PC-3 (cell line): ENCODE measurements at regions of chr13 and their contacts with region 1.

Region 1: GRCh38 chr13:39144941-39145533 is 106.8 kb downstream of the NHLRC3 start:
- DNase-seq: peak; percentile 65
- ATAC-seq: peak; percentile 60; the same call in 1 of the 2 replicates
- H3K4me3 ChIP-seq: no peak overlapping the region
- H3K27ac ChIP-seq: no peak overlapping the region
- H3K4me1 ChIP-seq: no peaks in the 10 kb centered on the region
- H3K27me3 ChIP-seq: peaks cover 26% of the 10 kb centered on the region
- CTCF ChIP-seq: peak; percentile 75

Region 2: DNA sequence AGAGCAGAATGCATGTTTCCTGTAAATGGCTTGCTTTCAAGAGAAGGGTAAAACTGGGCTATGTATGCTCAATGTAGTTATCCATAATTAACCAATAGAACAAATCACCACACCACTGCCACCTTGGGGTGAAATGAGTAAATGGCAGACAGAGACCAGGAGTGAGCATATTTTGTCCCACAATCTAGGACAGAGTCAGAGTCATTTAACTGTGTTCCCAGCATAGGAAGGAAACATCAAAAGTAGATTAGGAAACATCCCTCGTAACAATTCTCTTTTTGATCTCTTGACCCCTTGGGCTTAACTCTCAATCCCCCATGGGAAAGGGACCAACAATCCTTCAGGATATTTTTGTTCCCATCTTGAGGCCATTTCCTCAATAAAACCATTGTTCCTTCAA is 118.0 kb after region 1 on chr13:
- CTCF ChIA-PET with region 1: interaction called, 3 read pairs
- POLR2A ChIA-PET with region 1: no interaction called
- intact Hi-C with region 1: loop called (anchors 1 kb)
- DNase-seq: peak; percentile 65
- ATAC-seq: peak; percentile 80
- H3K4me3 ChIP-seq: no peak overlapping the region
- H3K27ac ChIP-seq: no peak overlapping the region
- H3K4me1 ChIP-seq: peaks cover 8% of the 10 kb centered on the region
- H3K27me3 ChIP-seq: no peaks in the 10 kb centered on the region
- CTCF ChIP-seq: peak; percentile 69

Region 3: GRCh38 chr13:39415008-39415802 is 270.2 kb after region 1 on chr13:
- CTCF ChIA-PET with region 1: no interaction called
- POLR2A ChIA-PET with region 1: no interaction called
- intact Hi-C with region 1: loop called (anchors 5 kb)
- DNase-seq: peak; percentile 44
- ATAC-seq: peak; percentile 81
- H3K4me3 ChIP-seq: no peak overlapping the region
- H3K27ac ChIP-seq: no peak overlapping the region
- H3K4me1 ChIP-seq: peaks cover 7% of the 10 kb centered on the region; the same call in 1 of the 2 replicates
- H3K27me3 ChIP-seq: no peaks in the 10 kb centered on the region
- CTCF ChIP-seq: peak; percentile 66

Region 4: DNA sequence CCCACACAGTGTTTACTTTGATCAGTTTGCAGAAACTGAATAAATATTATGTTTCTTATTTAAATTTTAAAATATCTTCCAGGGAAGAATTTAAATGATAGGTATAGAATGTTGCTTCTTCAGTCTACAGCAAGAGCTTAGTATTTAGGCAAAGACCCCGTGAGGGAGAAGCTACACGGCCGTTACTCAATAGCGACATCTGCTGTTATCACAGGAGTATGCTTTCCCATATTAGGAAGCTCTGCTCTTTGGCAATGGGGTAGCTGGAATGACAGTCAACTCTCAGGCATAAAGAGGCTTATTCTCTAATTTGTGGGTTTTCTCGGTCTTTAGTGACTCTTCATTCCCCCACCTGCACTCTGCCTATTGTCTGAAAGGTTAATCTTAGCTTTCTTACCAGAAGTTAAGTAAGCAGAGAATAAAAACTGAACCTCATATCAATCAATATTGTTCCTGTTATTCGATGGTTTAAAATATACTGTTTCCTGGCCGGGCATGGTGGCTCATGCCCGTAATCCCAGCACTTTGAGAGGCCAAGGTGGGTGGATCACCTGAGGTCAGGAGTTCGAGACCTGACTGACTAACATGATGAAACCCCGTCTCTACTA is 471.2 kb after region 1 on chr13:
- CTCF ChIA-PET with region 1: interaction called, 22 read pairs
- POLR2A ChIA-PET with region 1: no interaction called
- intact Hi-C with region 1: loop called (anchors 2 kb)
- DNase-seq: peak; percentile 72
- ATAC-seq: peak; percentile 59
- H3K4me3 ChIP-seq: no peak overlapping the region
- H3K27ac ChIP-seq: no peak overlapping the region
- H3K4me1 ChIP-seq: no peaks in the 10 kb centered on the region
- H3K27me3 ChIP-seq: no peaks in the 10 kb centered on the region
- CTCF ChIP-seq: peak; percentile 77

Region 5: DNA sequence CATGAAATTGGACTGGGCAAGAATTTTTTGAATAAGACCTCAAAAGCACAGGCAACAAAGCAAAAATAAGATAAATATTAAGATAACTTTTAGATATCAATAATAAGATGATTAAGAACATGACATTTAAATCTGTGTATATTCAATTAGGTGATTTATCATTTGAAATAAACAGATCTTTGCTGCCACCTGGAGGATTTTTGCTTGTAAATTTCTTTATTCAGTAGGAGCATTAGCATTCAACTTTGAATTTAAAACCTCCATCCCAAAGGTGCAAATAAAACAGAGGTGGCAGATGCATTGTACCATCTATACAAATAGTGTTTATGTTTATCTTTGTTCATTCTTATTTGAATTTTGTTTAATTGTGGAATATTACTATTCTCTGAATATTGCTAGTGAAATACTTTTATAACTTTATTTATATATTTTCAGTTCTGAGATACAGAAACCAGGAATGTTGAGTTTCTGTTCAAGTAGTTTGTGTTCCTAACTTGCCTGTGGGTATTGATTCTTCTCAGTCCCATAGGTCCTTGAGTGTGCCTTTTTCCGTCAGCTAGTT is 531.4 kb after region 1 on chr13:
- CTCF ChIA-PET with region 1: no interaction called
- POLR2A ChIA-PET with region 1: no interaction called
- intact Hi-C with region 1: loop called (anchors 5 kb)
- DNase-seq: peak; percentile 67
- ATAC-seq: no peak
- H3K4me3 ChIP-seq: no peak overlapping the region
- H3K27ac ChIP-seq: no peak overlapping the region
- H3K4me1 ChIP-seq: no peaks in the 10 kb centered on the region
- H3K27me3 ChIP-seq: no peaks in the 10 kb centered on the region
- CTCF ChIP-seq: peak; percentile 58